Mammary epithelial cell (primary cell): ENCODE measurements at regions of chr18 and their contacts with region 1.

Region 1: GRCh38 chr18:59063300-59063906 is 76.3 kb upstream of the SEC11C start:
- DNase-seq: no peak
- H3K4me3 ChIP-seq: no peak overlapping the region
- H3K27ac ChIP-seq: no peak overlapping the region
- H3K4me1 ChIP-seq: no peaks in the 10 kb centered on the region
- H3K27me3 ChIP-seq: no peaks in the 10 kb centered on the region
- CTCF ChIP-seq: no peak

Region 2: DNA sequence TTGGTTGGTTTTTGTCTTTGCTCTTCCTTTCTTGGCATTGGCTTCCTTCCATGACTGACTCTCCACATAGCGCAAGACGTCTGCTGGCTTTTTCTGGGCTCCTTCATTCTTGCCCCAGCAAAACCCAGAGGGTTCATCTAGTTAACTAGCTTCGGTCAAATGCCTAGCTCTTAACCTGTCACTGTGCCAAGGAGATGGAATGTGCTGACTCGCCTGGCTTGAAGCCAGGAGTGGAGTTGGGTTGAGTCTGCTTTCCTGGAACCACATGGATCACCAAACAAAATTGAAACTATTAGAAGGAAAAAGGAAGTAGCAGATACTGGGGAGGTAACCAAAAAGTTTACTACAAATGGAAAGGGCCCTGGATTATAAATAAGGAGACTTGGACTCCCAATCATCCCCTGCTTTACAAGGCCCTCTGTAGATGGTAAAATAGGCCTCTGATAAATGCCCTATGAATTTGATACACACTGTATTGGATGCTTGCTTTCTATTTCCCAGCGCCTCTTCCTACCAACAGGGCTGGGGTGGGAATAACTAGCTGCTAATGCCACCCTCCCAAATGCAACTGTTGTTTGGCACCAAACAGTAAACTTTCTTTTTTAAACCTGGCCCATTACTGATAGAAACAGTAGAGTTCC is 380.9 kb before region 1 on chr18:
- CTCF ChIA-PET with region 1: no interaction called
- dilution Hi-C with region 1: no loop called
- in situ Hi-C with region 1: no loop called
- intact Hi-C with region 1: no loop called
- DNase-seq: peak; percentile 64
- H3K4me3 ChIP-seq: no peak overlapping the region
- H3K27ac ChIP-seq: no peak overlapping the region
- H3K4me1 ChIP-seq: peaks cover 20% of the 10 kb centered on the region
- H3K27me3 ChIP-seq: no peaks in the 10 kb centered on the region
- CTCF ChIP-seq: no peak

Region 3: GRCh38 chr18:58776084-58776483 is 287.3 kb before region 1 on chr18:
- CTCF ChIA-PET with region 1: no interaction called
- dilution Hi-C with region 1: loop called (anchors 5 kb)
- in situ Hi-C with region 1: loop called (anchors 5 kb)
- intact Hi-C with region 1: no loop called
- DNase-seq: no peak
- H3K4me3 ChIP-seq: no peak overlapping the region
- H3K27ac ChIP-seq: no peak overlapping the region
- H3K4me1 ChIP-seq: no peaks in the 10 kb centered on the region
- H3K27me3 ChIP-seq: no peaks in the 10 kb centered on the region
- CTCF ChIP-seq: no peak